Activated B cell treated with CpG ODN at 0.5 μM for 24 hours (primary cell): ENCODE measurements at regions of chr11 and their contacts with region 1.

Region 1: GRCh38 chr11:67118801-67119584 is at the start of gene KDM2A:
- DNase-seq: peak; percentile 93
- ATAC-seq: peak; percentile 76
- H3K4me3 Mint-ChIP-seq: peak within 1 kb of the TSS; percentile 91
- H3K27ac Mint-ChIP-seq: peak within 1 kb of the TSS; percentile 91
- H3K4me1 Mint-ChIP-seq: peaks cover 36% of the 10 kb centered on the region
- H3K27me3 Mint-ChIP-seq: no peaks in the 10 kb centered on the region
- CTCF ChIP-seq: no peak
- total RNA-seq, gene KDM2A: 141 and 160 TPM in 2 replicates

Region 2: DNA sequence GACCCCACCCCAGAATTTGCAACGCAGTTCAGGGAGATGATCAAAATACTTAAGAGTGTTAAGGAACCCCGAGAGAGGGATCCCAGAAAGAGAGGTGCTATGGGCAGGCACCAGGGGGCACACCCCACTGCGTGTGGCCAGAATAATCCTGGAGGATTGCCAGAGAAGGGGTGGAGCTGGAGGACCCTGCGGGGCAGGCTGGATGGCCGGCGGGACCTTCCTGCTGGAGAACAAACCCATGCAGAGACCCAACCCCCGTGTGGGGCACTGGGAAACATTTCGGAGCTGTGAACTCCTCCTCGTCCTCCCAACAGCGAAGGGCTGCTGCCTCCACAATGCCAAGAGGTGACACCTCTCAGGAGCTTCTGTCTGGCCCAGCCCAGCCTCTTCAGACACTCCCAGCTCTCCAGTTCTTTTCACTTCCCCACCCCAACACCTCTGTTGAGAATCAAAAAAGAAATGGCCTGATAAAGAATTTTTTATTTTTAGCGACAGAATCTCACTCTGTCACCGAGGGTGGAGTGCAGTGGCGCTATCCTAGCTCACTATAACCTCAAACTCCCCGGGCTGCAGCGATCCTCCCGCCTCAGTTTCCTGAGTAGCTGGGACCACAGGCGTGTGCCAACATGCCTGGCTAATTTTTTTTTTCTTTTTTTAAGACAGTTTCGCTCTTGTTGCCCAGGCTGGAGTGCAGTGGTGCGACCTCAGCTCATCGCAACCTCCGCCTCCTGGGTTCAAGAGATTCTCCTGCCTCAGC is 36.8 kb before region 1 on chr11:
- CTCF ChIA-PET with region 1: interaction called, 4 read pairs
- POLR2A ChIA-PET with region 1: interaction called, 3 read pairs
- intact Hi-C with region 1: loop called (anchors 1 kb)
- DNase-seq: no peak
- ATAC-seq: no peak
- H3K4me3 Mint-ChIP-seq: peak overlapping the region; percentile 41
- H3K27ac Mint-ChIP-seq: no peak overlapping the region
- H3K4me1 Mint-ChIP-seq: peaks cover 14% of the 10 kb centered on the region
- H3K27me3 Mint-ChIP-seq: peaks cover 10% of the 10 kb centered on the region
- CTCF ChIP-seq: no peak

Region 3: GRCh38 chr11:67213178-67213621 is 94.2 kb after region 1 on chr11:
- CTCF ChIA-PET with region 1: no interaction called
- POLR2A ChIA-PET with region 1: no interaction called
- intact Hi-C with region 1: loop called (anchors 2 kb)
- DNase-seq: no peak
- ATAC-seq: peak; percentile 95
- H3K4me3 Mint-ChIP-seq: peak overlapping the region; percentile 36
- H3K27ac Mint-ChIP-seq: peak overlapping the region; percentile 55
- H3K4me1 Mint-ChIP-seq: peaks cover 20% of the 10 kb centered on the region
- H3K27me3 Mint-ChIP-seq: no peaks in the 10 kb centered on the region
- CTCF ChIP-seq: no peak